BJ (cell line): ENCODE measurements at regions of chr17 and their contacts with region 1.

Region 1: DNA sequence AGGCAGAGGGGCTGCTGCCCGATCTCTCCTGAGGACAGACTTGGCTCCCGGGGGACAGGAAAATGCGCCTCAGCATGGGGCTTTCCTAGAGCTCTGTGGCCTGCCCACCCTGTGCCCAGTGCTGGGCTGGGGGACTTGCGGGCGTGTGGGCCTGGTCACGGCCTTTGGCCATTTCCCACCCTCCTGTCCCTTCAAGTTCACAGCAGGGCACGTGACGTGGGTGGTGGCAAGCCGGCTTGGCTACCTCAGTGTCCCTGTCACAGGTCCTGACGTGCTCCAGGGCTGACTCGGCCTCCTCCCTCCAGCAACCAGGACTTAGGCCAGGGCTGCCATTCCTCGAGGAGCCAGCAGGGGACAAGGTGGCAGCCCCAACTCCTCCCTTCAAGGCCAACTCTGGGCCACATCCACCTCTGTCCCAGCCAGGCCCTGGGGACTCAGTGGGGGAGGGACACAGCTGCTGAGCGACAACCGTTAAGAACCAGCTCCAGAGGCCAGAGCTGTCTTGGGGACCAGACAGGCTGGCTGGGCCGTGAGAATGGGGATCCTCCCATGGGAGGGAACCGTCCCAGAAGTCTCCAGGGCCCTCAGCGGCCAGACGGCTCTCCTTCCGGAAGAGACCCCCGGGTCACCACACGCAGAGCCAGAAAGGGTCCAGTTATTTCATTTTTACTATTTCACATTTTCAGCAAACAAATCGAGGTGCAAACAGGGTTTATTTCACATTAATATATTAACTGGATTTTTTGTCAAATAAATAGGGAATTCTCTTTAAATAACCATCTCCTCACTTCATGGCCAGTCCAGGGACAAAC is 1.1 kb upstream of the UNC13D start:
- DNase-seq: no peak
- H3K4me3 ChIP-seq: no peak overlapping the region
- H3K27me3 ChIP-seq: no peaks in the 10 kb centered on the region
- CTCF ChIP-seq: peak; percentile 77

Region 2: GRCh38 chr17:75731716-75732498 is 113.3 kb before region 1 on chr17:
- CTCF ChIA-PET with region 1: no interaction called
- POLR2A ChIA-PET with region 1: no interaction called
- DNase-seq: no peak
- H3K4me3 ChIP-seq: no peak overlapping the region
- H3K27me3 ChIP-seq: no peaks in the 10 kb centered on the region
- CTCF ChIP-seq: no peak

Region 3: DNA sequence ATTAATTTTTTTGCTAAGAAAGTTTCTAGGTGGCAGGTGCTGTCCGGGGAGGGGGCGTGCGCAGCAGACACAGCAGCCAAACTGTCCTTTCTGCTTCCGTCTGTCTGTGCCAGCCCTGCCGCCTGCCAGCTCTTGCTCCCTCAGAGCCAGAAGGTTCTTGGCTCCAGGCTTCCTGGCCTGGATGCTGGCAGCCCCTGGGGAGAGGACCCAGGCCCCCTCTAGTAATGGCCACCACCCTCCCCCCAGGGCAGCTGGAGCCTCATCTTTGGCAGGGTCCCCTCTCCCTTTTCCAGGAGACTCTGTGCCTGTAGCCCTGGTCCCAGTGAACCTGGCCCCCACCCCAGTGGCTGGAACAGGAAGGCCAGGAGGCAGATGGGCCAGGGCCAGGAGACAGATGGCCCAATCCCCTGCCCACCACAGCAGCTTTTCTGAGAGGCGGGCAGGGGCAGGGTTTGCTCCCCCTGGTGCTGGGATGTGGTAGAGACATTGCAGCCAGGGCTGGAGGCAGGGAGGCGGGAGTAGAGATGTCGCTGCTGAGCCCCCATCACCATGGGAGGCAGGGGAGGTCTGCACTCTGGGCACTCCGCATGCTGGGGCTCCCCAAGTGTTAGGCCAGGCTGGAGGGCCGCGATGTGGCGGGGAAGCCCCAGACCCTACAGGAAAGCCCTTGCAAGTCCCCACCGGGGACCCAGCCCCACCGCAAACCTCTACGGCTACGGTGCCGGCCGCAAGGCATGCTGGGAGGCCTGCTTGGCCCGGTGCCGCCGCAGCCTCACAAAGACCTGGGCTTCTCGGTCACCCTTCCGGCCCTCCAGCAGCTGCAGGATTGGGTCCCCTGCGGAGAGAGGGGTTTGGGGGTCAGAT is 17.8 kb before region 1 on chr17:
- CTCF ChIA-PET with region 1: interaction called, 15 read pairs
- POLR2A ChIA-PET with region 1: no interaction called
- DNase-seq: no peak
- H3K4me3 ChIP-seq: no peak overlapping the region
- H3K27me3 ChIP-seq: no peaks in the 10 kb centered on the region
- CTCF ChIP-seq: peak; percentile 79

Region 4: DNA sequence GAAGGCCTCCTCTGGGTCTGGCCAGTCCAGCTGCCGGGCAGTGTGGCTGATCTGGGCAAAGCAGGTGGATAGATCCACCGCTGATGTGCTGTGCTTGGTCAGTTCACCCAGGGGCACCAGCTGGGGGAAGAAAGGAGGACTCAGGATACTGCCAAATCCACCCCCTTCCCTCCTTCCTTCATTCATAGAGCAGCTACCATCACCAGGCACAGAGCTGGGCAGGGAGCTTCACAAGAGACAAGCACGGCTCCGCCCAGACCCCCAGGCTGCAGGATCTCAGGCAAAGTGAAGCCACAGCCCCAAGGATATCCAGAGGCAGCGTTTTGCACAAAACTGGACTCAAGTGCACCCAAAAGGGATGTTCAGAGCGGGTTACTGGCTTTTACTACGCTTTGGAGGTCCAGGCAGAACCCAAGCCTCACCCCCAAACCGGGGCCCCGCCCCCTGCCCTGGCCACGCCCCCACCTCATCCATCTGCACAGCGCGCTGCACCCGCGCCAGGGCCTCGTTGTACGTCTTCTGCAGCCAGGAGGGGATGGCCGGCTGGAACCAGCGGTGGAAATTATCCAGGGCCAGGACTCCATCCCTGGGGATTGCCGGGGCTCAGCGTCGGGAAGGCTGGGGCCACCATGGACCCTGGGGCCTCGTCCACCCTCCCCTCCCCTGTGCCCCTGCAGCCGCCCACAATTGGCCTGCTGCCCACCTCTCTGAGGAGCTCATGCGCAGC is 10.1 kb before region 1 on chr17:
- CTCF ChIA-PET with region 1: interaction called, 20 read pairs
- POLR2A ChIA-PET with region 1: no interaction called
- DNase-seq: no peak
- H3K4me3 ChIP-seq: no peak overlapping the region
- H3K27me3 ChIP-seq: no peaks in the 10 kb centered on the region
- CTCF ChIP-seq: no peak

Region 5: DNA sequence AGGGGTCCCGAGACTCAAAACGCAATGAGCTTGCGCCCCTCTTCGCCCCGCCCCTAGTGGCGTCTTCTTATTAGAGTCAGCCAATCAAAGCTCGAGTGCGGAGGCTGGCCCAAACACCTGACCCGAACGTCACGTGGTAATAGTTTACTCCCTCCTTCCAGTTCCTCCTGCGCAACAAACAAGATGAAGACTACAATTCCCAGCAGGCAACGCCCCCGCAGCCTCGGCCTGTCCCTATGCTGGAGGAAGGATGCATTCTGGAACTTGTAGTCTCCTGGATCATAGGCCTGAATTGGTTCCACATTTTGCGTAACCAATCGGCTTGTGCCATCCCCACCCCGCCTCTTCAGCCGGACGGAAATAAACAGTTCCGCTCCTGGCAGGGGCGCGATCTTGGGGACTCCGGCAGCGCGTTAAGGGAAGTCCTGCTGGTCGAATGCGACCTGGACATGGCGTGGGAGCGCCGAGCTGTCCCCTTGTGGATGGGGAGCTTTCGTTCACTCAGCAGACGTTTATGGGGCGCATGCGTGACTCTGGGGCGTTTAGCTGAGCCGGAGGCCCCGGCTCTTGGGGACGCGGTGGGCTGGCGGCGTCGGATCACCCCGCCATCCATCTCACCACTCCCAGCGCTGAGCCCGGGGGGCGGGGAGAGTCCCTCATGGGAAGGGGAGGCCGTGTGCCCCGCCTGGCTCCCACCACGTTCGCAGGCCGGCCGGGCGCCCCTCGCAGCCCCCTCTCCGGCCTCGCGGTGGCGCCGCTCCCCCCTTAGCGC is 10.2 kb after region 1 on chr17 and contains the start of gene WBP2:
- CTCF ChIA-PET with region 1: interaction called, 19 read pairs
- POLR2A ChIA-PET with region 1: interaction called, 14 read pairs
- DNase-seq: peak; percentile 100
- H3K4me3 ChIP-seq: peak within 1 kb of the TSS; percentile 79
- H3K27me3 ChIP-seq: no peaks in the 10 kb centered on the region
- CTCF ChIP-seq: peak; percentile 17; the same call in 1 of the 2 replicates
- polyA plus RNA-seq, gene WBP2: 28.5 and 37.0 TPM in 2 replicates

Region 6: GRCh38 chr17:75896415-75897159 is 51.3 kb after region 1 on chr17 and contains the start of gene TRIM65:
- CTCF ChIA-PET with region 1: interaction called, 20 read pairs
- POLR2A ChIA-PET with region 1: no interaction called
- DNase-seq: no peak
- H3K4me3 ChIP-seq: peak within 1 kb of the TSS; percentile 52
- H3K27me3 ChIP-seq: no peaks in the 10 kb centered on the region
- CTCF ChIP-seq: peak; percentile 40
- polyA plus RNA-seq, gene TRIM65: 5.5 and 8.6 TPM in 2 replicates

Region 7: GRCh38 chr17:76000016-76000754 is 154.9 kb after region 1 on chr17:
- CTCF ChIA-PET with region 1: no interaction called
- POLR2A ChIA-PET with region 1: no interaction called
- DNase-seq: no peak
- H3K4me3 ChIP-seq: no peak overlapping the region
- H3K27me3 ChIP-seq: no peaks in the 10 kb centered on the region
- CTCF ChIP-seq: peak; percentile 79